OCI-LY7 (cell line): ENCODE measurements at regions of chr18 and their contacts with region 1.

Region 1: GRCh38 chr18:58781627-58782194 is 83.0 kb upstream of the ZNF532 start:
- DNase-seq: peak; percentile 73
- H3K4me3 ChIP-seq: no peak overlapping the region
- H3K27ac ChIP-seq: no peak overlapping the region
- H3K4me1 ChIP-seq: no peaks in the 10 kb centered on the region
- CTCF ChIP-seq: peak; percentile 79

Region 2: DNA sequence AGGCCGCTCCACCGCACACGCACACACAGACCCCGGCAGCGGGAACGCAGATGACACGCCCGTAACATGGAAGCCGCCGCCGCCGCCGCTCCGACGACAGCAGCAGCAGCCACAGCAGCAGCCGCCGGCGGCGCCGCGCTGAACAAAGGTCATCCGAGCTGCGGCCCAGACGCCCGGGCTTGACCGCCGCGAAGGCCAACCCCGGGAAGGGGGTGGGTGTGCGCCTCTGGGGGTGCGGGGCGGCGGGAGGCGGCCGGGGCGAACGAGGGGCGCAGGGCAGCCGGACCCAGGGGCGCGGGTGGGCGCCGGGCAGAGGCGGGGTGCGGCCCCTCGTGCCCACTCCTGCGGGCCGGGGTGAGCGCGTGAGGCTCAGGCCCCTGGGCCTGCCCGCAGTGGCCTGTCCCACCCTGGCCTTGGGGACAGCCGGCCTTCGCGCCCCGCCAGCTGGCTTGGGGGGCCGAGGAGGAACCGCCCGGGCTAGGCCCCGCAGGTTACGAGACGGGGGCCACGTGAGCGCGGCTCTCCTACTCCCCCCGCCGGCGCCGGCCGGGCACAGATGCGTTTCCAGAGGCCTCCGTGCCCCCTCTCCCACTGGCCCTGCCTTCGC is 81.9 kb after region 1 on chr18:
- CTCF ChIA-PET with region 1: no interaction called
- POLR2A ChIA-PET with region 1: no interaction called
- intact Hi-C with region 1: loop called (anchors 10 kb)
- DNase-seq: peak; percentile 33
- H3K4me3 ChIP-seq: peak overlapping the region; percentile 66
- H3K27ac ChIP-seq: no peak overlapping the region
- H3K4me1 ChIP-seq: peaks cover 31% of the 10 kb centered on the region
- CTCF ChIP-seq: no peak

Region 3: GRCh38 chr18:58896268-58896667 is 114.6 kb after region 1 on chr18:
- CTCF ChIA-PET with region 1: no interaction called
- POLR2A ChIA-PET with region 1: no interaction called
- intact Hi-C with region 1: loop called (anchors 5 kb)
- DNase-seq: peak; percentile 70
- H3K4me3 ChIP-seq: peak overlapping the region; percentile 68
- H3K27ac ChIP-seq: peak overlapping the region; percentile 87
- H3K4me1 ChIP-seq: peaks cover 35% of the 10 kb centered on the region
- CTCF ChIP-seq: no peak

Region 4: GRCh38 chr18:59056706-59057492 is 275.2 kb after region 1 on chr18:
- CTCF ChIA-PET with region 1: no interaction called
- POLR2A ChIA-PET with region 1: no interaction called
- intact Hi-C with region 1: loop called (anchors 1 kb)
- DNase-seq: peak; percentile 73
- H3K4me3 ChIP-seq: no peak overlapping the region
- H3K27ac ChIP-seq: no peak overlapping the region
- H3K4me1 ChIP-seq: no peaks in the 10 kb centered on the region
- CTCF ChIP-seq: peak; percentile 81

Region 5: DNA sequence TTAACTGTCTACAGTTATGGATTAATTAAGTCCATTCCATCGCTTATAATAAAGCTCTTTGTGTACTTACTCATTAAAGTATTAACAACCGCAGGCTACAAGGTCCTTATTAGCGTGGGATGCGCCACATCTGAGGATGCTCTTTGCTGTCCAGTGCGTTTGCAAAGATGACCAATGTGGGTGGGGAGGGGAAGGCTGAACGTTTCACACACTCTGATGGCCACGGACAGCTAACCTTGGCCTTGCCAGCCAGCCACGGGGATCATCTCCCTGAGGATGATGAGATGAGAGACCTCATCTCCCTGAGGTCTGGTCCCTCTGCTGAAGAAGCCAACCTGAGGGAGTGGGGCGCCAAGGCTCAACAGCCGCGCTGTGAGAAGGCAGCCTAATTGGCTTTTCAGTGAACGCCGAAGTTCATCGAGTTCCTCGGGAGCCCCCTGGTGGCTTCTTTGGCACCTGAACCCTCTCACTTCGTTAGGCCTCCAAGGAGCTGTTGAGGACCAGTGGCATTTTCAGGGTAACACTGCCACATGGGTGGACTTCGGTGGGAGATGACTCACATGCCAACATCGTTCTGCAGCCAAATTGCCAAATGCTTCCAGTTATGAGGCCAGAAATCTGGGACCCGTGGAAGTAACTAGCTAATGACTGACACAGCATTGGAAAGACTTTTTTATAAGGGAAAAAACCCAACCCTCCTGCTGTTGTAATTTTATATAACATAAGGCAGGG is 288.6 kb after region 1 on chr18:
- CTCF ChIA-PET with region 1: interaction called, 3 read pairs
- POLR2A ChIA-PET with region 1: interaction called, 3 read pairs
- intact Hi-C with region 1: loop called (anchors 1 kb)
- DNase-seq: peak; percentile 64
- H3K4me3 ChIP-seq: no peak overlapping the region
- H3K27ac ChIP-seq: no peak overlapping the region
- H3K4me1 ChIP-seq: no peaks in the 10 kb centered on the region
- CTCF ChIP-seq: peak; percentile 79